ENCODE measurements at regions of chr9 and their contacts with region 1.

Region 1: DNA sequence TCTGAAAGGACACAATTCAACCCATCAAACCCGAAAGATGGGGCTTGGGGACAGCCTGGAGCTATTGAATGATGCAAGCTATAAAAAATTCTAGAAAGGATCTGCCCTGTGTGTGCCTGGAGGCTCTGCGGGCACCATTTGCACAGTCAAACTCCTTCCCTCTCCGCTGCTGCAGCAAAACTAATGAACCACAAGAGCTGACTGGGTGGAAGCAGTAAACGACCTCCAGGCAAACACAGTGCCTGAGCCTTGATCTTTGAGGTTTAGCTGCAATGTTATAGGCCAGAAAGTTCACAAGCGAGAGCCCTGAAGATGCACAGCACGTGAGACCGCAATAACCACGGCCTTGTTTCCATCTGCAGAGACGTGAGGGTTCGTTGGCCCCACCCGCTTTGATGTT is 69.2 kb upstream of the S1PR3 start:
- DNase-seq: no peak
- ATAC-seq: no peak
- H3K4me3 ChIP-seq: no peak overlapping the region
- H3K27ac ChIP-seq: no peak overlapping the region
- H3K4me1 ChIP-seq: no peaks in the 10 kb centered on the region
- H3K27me3 ChIP-seq: no peaks in the 10 kb centered on the region

Region 2: GRCh38 chr9:88892724-88893123 is 29.3 kb before region 1 on chr9:
- intact Hi-C with region 1: no loop called
- DNase-seq: no peak
- ATAC-seq: no peak
- H3K4me3 ChIP-seq: no peak overlapping the region
- H3K27ac ChIP-seq: no peak overlapping the region
- H3K4me1 ChIP-seq: no peaks in the 10 kb centered on the region
- H3K27me3 ChIP-seq: no peaks in the 10 kb centered on the region

Region 3: DNA sequence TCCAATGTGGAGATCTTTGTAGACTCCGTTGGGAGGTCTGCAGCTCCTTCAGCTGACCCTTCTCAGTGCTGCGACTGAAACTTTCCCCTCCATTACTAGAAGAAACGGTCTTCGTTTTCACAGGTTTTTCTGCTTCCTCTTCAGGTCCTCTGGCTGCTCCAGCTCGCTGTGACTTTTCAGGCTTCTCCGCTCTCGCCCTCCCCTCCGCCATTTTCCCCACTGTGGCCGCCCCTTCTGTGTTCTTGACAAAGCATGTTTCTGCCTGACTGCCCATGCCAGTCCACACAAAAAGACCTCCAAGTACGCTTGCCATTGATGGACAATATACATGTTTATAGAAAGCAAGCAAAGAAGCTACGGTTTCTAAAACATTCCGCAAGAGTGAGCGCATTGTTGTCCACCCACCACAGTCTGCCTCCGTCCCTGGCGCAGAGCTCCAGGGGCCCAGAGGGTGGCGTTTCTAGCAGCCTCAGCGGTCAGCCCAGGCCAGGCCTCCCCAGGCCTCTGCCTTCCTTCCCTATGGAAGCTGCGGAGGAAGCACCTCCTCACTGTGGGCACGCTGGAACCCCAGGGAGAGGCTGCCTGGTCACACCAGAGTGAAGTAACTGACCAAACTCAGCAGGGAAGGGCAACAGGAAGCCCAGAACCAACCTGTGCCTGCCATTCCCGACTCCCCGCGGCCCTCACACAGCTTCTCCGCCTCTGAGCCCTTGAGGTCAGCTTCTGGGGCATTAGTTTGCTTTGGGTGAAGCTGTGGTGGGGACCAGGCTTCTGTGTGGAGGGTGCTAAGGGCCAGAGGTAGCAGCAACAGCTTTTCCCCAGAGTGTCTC is 49.3 kb after region 1 on chr9:
- intact Hi-C with region 1: loop called in 1 of 2 experiments (anchors 2 kb)
- DNase-seq: no peak
- ATAC-seq: no peak
- H3K4me3 ChIP-seq: no peak overlapping the region
- H3K27ac ChIP-seq: no peak overlapping the region
- H3K4me1 ChIP-seq: no peaks in the 10 kb centered on the region
- H3K27me3 ChIP-seq: no peaks in the 10 kb centered on the region

Region 4: DNA sequence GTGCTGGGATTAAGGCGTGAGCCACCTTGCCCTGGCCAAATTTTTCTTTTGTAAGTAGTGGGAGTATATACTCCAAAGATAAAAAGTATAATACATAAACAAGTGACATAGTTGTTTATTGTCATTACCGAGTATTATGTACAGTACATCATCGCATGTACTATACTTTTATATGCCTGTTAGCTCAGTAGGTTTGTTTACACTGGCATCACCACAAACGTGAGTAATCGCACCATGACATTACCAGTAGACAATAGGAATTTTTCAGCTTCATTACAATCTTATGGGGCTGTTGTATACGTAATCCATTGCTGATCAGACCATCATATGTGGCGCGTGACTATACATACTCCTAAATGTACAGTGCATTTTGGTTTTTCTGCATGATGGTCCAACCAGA is 406.0 kb after region 1 on chr9:
- intact Hi-C with region 1: no loop called
- DNase-seq: no peak
- ATAC-seq: no peak
- H3K4me3 ChIP-seq: no peak overlapping the region
- H3K27ac ChIP-seq: no peak overlapping the region
- H3K4me1 ChIP-seq: no peaks in the 10 kb centered on the region
- H3K27me3 ChIP-seq: no peaks in the 10 kb centered on the region

Measured in aorta (tissue), 5 donors.